Panc1 (cell line): ENCODE measurements at regions of chr4 and their contacts with region 1.

Region 1: GRCh38 chr4:184733654-184734524 is at the start of gene CENPU:
- DNase-seq: peak; percentile 85
- ATAC-seq: peak; percentile 96
- H3K4me3 ChIP-seq: peak within 1 kb of the TSS; percentile 90 to 94
- H3K27ac ChIP-seq: peak within 1 kb of the TSS; percentile 81
- H3K4me1 ChIP-seq: peaks cover 2% of the 10 kb centered on the region
- H3K27me3 ChIP-seq: no peaks in the 10 kb centered on the region
- CTCF ChIP-seq: no peak
- total RNA-seq, gene CENPU: 16.6 TPM

Region 2: GRCh38 chr4:184364100-184364921 is 369.6 kb before region 1 on chr4:
- CTCF ChIA-PET with region 1: no interaction called
- POLR2A ChIA-PET with region 1: no interaction called
- in situ Hi-C with region 1: no loop called
- intact Hi-C with region 1: no loop called
- DNase-seq: no peak
- ATAC-seq: no peak
- H3K4me3 ChIP-seq: no peak overlapping the region
- H3K27ac ChIP-seq: no peak overlapping the region
- H3K4me1 ChIP-seq: peaks cover 2% of the 10 kb centered on the region
- H3K27me3 ChIP-seq: no peaks in the 10 kb centered on the region
- CTCF ChIP-seq: no peak

Region 3: DNA sequence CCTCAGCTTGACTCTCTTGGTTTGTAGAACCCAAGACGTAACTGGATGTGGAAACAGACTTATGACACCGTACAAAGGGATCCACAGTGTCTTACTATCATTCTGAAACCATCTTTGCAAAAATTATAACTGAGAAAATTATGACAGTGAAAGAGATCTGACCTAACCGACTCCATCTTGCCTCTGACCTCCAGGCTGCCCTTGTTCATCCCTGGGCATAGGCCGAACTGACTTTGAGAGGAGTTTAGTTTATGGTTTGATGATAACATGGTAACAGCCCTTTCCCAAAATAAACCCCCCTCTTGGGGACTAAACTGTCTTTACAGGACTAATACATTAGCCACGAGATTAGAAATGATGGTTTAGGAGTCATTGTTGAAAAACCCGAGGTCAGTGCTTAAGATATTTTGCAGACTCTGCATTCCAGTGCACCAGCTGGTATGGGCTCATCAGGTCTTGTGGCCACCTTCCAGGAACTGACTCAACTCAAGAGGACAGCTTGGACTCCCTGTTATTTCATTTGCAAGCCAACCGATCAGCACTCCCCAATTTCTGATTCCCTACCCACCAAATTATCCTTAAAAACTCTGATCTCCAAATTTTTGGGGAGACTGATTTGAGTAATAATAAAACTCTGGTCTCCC is 134.3 kb before region 1 on chr4:
- CTCF ChIA-PET with region 1: no interaction called
- POLR2A ChIA-PET with region 1: no interaction called
- in situ Hi-C with region 1: no loop called
- intact Hi-C with region 1: no loop called
- DNase-seq: no peak
- ATAC-seq: no peak
- H3K4me3 ChIP-seq: no peak overlapping the region
- H3K27ac ChIP-seq: no peak overlapping the region
- H3K4me1 ChIP-seq: no peaks in the 10 kb centered on the region
- H3K27me3 ChIP-seq: no peaks in the 10 kb centered on the region
- CTCF ChIP-seq: no peak

Region 4: DNA sequence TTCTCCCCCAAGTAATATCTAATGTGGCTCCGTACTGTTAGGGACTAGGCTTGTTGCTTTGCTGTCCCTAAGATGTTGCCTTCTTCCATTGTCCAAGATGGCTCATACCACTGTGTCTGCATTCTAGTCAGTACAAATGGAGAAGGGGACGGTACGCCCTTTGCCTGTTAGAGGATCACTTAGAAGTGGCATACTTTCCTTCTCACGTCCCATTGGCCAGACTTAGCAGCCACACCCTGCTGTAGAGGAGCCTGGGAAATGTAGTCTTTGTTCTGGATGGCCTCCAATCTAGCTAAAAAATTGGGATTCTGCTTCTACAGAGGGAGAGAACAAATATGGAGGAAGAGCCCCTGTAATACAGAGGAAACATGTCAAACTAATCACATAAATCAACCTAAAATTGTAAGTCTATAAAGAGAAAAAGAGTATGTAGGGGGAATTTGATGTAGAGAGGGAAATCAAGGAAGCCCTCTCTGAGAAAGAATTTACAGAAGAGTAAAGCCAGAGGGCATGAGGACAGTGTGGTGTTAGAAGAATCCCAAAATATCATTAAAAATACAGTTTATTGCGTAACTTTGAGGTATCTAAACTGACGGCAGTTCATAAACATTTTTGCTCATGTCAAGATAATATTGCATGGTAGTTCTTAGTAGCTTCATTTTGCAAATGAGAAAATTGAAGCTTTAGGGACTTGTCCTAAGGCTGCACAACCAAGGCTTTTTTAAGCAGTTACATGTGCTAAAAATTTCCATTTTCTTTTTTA is 69.3 kb before region 1 on chr4:
- CTCF ChIA-PET with region 1: no interaction called
- POLR2A ChIA-PET with region 1: no interaction called
- in situ Hi-C with region 1: no loop called
- intact Hi-C with region 1: no loop called
- DNase-seq: no peak
- ATAC-seq: no peak
- H3K4me3 ChIP-seq: no peak overlapping the region
- H3K27ac ChIP-seq: no peak overlapping the region
- H3K4me1 ChIP-seq: no peaks in the 10 kb centered on the region
- H3K27me3 ChIP-seq: no peaks in the 10 kb centered on the region
- CTCF ChIP-seq: no peak

Region 5: DNA sequence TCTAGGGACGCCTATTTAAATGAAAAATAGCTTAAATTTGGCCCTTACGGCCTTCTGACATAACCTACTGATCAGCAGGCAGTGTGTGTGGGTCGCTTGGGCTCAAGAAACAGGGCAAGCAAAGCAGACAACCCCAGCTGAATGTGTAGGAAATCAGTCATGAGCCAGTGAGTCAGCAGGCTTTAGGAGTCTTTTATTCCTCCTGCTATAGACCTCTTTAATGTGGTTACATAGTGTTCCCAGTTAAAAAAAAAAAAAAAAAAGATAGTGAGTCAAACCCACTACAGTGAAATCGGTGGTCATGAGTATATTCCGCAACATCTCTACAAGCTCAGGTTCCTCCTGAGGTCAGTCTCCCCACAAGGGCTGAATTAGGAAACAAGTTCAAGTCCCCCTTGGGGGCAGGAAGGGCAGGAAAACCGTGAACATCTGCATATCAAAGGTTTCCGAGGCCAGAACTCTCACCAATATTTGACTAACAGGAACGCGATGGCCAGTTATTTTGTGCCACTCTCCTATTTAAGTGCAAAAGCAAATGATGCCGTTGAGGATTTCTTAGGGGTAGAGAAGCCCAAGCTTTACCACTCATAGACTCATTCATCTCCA is 59.2 kb after region 1 on chr4:
- CTCF ChIA-PET with region 1: no interaction called
- POLR2A ChIA-PET with region 1: no interaction called
- in situ Hi-C with region 1: no loop called
- intact Hi-C with region 1: no loop called
- DNase-seq: peak; percentile 82
- ATAC-seq: peak; percentile 95
- H3K4me3 ChIP-seq: no peak overlapping the region
- H3K27ac ChIP-seq: peak overlapping the region; percentile 54; the same call in 1 of the 2 replicates
- H3K4me1 ChIP-seq: peaks cover 5% of the 10 kb centered on the region
- H3K27me3 ChIP-seq: no peaks in the 10 kb centered on the region
- CTCF ChIP-seq: no peak

Region 6: DNA sequence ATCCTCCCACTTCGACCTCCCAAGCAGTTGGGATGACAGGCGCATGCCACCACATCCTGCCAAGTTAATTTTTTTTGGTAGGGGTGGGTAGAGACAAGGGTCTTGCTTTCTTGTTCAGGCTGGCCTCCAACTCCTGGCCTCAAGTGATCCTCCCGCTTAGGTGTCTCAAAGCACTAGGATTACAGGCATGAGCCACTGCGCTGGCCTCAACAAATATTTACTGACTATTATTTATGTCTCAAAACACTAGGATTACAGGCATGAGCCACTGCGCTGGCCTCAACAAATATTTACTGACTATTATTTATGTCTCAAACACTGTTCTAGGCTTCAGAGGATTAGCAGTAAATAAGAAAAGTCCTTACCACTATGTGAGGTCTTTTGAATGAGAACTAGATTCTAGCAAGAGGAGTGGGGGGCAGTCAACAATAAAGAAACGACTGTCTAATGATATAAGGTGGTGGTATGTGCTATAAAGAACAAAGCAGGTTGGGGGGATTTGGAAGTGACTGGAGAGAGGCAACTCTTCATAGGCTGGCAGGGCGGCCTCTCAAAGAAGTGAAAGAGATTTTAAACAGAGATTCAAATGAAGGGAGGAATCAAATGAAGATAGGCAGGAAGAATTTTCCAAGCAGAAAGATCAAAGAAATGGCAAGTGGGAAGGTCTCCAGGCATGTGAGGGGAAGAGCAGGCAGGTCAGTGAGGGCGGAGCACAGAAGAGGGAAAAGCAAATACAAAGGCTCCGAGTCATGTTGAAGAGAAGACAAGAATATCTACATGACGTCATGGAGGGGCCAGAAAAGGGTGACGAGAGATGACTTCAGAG is 104.6 kb after region 1 on chr4:
- CTCF ChIA-PET with region 1: no interaction called
- POLR2A ChIA-PET with region 1: interaction called, 15 read pairs
- in situ Hi-C with region 1: no loop called
- intact Hi-C with region 1: no loop called
- DNase-seq: no peak
- ATAC-seq: no peak
- H3K4me3 ChIP-seq: no peak overlapping the region
- H3K27ac ChIP-seq: no peak overlapping the region
- H3K4me1 ChIP-seq: no peaks in the 10 kb centered on the region
- H3K27me3 ChIP-seq: no peaks in the 10 kb centered on the region
- CTCF ChIP-seq: no peak